Ascending aorta (tissue), 2 donors: ENCODE measurements at regions of chr20 and their contacts with region 1.

Region 1: DNA sequence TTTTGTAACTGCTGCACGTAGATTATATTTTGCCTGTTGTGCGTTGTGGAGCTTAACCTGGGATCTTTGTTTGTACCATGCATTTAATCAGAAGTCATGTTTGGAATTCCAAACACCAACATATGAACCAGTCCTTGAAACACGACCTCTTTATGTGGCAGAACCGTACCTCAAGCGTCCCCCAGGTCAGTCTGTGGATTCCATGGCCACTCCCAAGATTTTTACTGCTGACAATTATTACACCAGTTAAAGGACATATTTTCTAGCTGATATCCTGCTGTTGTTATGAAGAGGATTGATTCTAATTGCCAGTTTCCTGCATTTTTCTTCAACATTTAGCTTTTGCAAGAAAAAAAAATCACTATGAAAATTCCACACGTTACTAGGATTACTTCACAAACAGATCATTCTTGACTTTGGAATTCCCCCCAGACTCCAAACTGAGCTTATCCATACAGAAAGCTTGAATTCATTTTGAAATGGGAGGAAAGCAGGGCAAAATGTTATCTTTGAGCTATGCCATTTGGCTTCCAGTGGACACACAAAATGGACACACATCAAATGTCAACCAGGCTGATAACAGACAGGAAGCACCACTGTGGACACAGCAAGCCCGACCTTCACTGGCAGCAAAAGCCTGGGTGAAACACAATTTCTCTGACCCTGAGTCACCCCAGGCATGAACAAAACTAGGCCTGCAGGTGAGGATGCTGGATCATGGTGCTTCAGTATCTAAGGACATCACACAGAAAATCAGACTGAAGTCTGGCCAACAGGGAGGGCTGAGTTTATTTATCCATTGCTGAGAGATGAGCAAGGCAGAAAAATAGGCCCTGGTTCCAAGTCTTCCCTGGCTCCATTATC is 542.9 kb upstream of the JAG1 start:
- DNase-seq: no peak
- H3K4me3 ChIP-seq: no peak overlapping the region
- H3K27ac ChIP-seq: peak overlapping the region; percentile 31 to 49
- H3K4me1 ChIP-seq: peaks cover 0 to 21% of the 10 kb centered on the region in 2 donors
- H3K27me3 ChIP-seq: no peaks in the 10 kb centered on the region
- CTCF ChIP-seq: no peak

Region 2: GRCh38 chr20:10476319-10476724 is 740.4 kb before region 1 on chr20:
- intact Hi-C with region 1: loop called (anchors 10 kb)
- DNase-seq: no peak
- H3K4me3 ChIP-seq: no peak overlapping the region
- H3K27ac ChIP-seq: no peak overlapping the region
- H3K4me1 ChIP-seq: peaks cover 0 to 17% of the 10 kb centered on the region in 2 donors
- H3K27me3 ChIP-seq: no peaks in the 10 kb centered on the region
- CTCF ChIP-seq: no peak

Region 3: DNA sequence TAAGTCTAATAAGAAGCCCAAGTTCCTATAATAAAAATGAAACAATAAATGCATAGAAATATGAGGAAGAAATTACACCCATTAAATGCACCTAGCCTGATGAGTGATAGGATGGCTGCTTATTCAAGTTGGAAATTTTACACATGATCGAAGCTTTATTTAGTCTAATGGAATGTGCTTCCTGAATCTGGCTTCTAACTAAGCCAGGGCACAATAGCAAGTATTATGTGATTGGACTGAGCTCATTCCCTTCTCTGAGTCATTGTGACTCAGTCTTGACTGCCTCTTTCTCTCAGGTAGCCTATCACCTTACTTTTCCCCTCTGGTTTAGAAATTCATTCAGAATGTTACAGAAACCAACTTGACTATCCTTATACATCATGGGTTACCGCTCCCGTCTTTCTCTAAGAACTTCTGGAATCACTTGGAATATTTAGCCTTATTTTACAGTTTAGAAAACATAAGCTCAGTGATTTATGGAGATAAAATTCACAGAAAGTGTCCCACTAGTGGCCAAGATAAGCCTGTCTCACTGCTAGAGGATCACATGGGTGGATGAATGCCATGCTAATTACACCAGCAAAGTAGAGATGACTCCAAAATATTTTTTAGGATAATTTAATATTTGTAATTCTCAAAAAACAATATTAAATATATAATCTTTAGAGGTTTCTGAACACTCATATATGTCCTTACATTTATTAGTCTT is 37.6 kb before region 1 on chr20:
- intact Hi-C with region 1: no loop called
- DNase-seq: no peak
- H3K4me3 ChIP-seq: no peak overlapping the region
- H3K27ac ChIP-seq: peak overlapping the region; percentile 3 to 28
- H3K4me1 ChIP-seq: peaks cover 0 to 13% of the 10 kb centered on the region in 2 donors
- H3K27me3 ChIP-seq: no peaks in the 10 kb centered on the region
- CTCF ChIP-seq: no peak